Dorsolateral prefrontal cortex (tissue), 120 donors: ENCODE measurements at regions of chr6 and their contacts with region 1.

Region 1: GRCh38 chr6:36954262-36954931 is at the start of gene PI16:
- DNase-seq: peak in 2 of 10 donors; percentile 25 to 42
- H3K4me3 ChIP-seq: peak within 1 kb of the TSS in 5 of 59 donors; percentile 6 to 31 (median 8)
- H3K27ac ChIP-seq: peak within 1 kb of the TSS in 5 of 59 donors; percentile 11 to 50 (median 36)
- H3K27me3 ChIP-seq: no peaks in the 10 kb centered on the region
- CTCF ChIP-seq: no peak
- total RNA-seq, gene PI16: 3.1 to 69.5 (median 16.1) TPM

Region 2: GRCh38 chr6:36907781-36908180 is 46.6 kb before region 1 on chr6:
- intact Hi-C with region 1: loop called in 1 of 2 experiments (anchors 5 kb)
- DNase-seq: peak in 2 of 10 donors; percentile 49 to 54
- H3K4me3 ChIP-seq: peak overlapping the region in 2 of 59 donors; percentile 14 to 25
- H3K27ac ChIP-seq: peak overlapping the region in 46 of 59 donors; percentile 3 to 82 (median 54)
- H3K27me3 ChIP-seq: no peaks in the 10 kb centered on the region
- CTCF ChIP-seq: no peak

Region 3: DNA sequence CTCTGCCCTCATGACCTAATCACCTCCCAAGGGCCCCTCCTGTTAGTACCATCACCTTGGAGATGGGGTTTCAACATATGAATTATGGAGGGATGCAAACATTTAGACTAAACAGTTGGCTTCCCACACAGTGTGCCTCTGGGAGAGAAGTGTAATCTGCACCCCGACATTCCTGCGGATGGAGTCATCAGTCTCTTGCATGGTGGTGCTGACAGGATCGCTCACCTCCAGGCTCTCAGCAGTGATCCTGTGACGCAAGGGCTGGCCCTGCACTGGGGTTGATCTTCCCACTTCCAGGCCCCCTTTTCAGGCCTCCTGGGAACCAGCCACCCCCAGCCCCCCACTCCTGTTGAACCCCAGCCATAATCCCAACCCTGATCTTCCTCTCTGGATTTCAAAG is 15.9 kb before region 1 on chr6:
- intact Hi-C with region 1: no loop called
- DNase-seq: no peak
- H3K4me3 ChIP-seq: no peak overlapping the region
- H3K27ac ChIP-seq: no peak overlapping the region
- H3K27me3 ChIP-seq: no peaks in the 10 kb centered on the region
- CTCF ChIP-seq: no peak